Naive thymus-derived CD8-positive, alpha-beta T cell (primary cell): ENCODE measurements at regions of chr6 and their contacts with region 1.

Region 1: GRCh38 chr6:118709859-118710350 is 58.5 kb upstream of the CEP85L start:
- DNase-seq: peak in 9 of 10 donors; percentile 35 to 89 (median 66)
- ATAC-seq: peak; percentile 88 to 93
- H3K4me3 Mint-ChIP-seq: peak overlapping the region; percentile 95 to 99 (median 98)
- H3K27ac Mint-ChIP-seq: peak overlapping the region; percentile 93 to 100 (median 98)
- H3K4me1 Mint-ChIP-seq: peaks cover 39 to 83% (median 66%) of the 10 kb centered on the region in 4 donors
- H3K27me3 Mint-ChIP-seq: no peaks in the 10 kb centered on the region

Region 2: DNA sequence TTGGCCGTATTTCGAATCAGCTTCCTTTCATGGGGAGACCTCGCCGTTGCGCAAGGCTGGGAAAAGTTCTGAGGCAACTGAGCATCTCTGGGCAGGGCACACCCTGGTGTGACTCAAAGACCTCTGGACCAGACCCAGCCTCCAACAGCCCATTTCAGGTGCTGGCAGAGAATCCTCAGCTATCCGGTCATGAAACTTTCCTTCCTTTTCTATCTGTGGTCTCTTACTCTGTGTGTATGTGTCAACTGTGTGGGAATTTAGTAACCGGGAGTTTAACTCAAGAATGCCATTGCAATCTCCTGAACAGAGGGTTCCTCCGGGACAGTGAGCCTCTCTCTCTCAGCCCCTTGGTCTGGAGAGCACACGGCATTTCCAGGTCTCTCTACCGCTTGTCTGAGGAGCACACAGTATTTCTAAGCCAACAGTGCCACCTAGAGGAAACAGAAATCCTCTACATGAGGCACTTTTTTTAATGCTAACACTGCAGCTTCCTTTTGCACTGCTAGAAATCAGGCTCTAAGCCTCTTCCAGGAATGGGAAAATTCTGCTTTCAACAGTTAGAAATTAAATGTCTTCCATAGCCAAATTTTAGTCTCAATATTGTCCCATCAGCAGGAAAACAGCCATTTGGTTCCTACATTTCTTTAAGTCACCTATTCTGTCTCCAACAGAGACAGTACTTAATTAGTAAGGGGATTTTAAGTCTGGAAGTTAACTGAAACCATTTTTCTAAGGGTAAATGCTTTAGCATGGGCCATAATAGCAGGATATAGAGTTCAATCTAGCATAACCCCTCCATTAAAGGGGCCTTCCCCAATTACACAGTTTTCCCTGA is 129.1 kb before region 1 on chr6:
- POLR2A ChIA-PET with region 1: no interaction called
- DNase-seq: peak in 5 of 10 donors; percentile 10 to 34 (median 24)
- ATAC-seq: peak; percentile 56 to 69
- H3K4me3 Mint-ChIP-seq: peak overlapping the region in 2 of 10 donors; percentile 56 to 57
- H3K27ac Mint-ChIP-seq: peak overlapping the region; percentile 65 to 94 (median 85)
- H3K4me1 Mint-ChIP-seq: peaks cover 4 to 32% (median 21%) of the 10 kb centered on the region in 4 donors
- H3K27me3 Mint-ChIP-seq: no peaks in the 10 kb centered on the region

Region 3: DNA sequence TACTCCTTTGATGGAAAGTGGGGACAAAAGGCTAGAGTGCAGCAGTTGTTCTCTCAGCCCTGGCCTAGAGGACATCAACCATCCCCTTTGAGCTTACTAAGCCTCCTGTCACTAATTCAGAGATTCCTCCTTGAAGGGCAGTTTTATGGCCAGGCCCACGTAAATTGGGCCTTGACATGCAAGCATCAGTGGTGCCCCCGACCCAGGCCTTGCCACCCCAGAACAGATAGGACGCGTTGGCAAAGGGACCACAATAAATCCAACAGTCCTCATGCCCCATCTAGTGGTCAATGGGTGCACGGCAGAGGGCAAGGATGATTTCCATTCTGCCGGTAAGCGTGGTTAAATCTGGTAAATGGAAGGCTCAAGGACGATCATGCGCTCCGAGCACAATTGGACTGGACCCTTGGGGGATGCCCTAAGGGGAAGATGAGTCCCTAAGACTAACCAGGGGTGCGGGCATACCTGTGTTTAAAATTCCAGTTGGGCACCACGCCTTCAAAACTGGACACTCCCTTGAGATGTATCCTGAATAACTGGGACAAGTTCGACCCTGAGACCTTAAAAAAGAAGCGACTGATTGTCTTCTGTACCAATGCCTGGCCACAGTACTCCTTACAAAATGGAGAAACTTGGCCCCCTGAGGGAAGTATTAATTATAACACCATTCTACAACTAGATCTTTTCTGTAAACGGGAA is 91.1 kb before region 1 on chr6:
- POLR2A ChIA-PET with region 1: no interaction called
- DNase-seq: peak; percentile 36 to 82 (median 62)
- ATAC-seq: peak; percentile 92 to 93
- H3K4me3 Mint-ChIP-seq: peak overlapping the region in 5 of 10 donors; percentile 9 to 58 (median 27)
- H3K27ac Mint-ChIP-seq: peak overlapping the region; percentile 51 to 94 (median 86)
- H3K4me1 Mint-ChIP-seq: peaks cover 39 to 80% (median 64%) of the 10 kb centered on the region in 4 donors
- H3K27me3 Mint-ChIP-seq: no peaks in the 10 kb centered on the region

Region 4: GRCh38 chr6:118651282-118652050 is 58.4 kb before region 1 on chr6 and contains the start of gene CEP85L:
- POLR2A ChIA-PET with region 1: interaction called, 55 read pairs
- DNase-seq: peak; percentile 81 to 96 (median 90)
- ATAC-seq: peak; percentile 88 to 91
- H3K4me3 Mint-ChIP-seq: peak within 1 kb of the TSS; percentile 90 to 96 (median 94)
- H3K27ac Mint-ChIP-seq: peak within 1 kb of the TSS; percentile 88 to 98 (median 96)
- H3K4me1 Mint-ChIP-seq: peaks cover 24 to 58% (median 51%) of the 10 kb centered on the region in 4 donors
- H3K27me3 Mint-ChIP-seq: no peaks in the 10 kb centered on the region
- polyA plus RNA-seq, gene CEP85L: 31.1 to 50.0 (median 47.5) TPM

Region 5: DNA sequence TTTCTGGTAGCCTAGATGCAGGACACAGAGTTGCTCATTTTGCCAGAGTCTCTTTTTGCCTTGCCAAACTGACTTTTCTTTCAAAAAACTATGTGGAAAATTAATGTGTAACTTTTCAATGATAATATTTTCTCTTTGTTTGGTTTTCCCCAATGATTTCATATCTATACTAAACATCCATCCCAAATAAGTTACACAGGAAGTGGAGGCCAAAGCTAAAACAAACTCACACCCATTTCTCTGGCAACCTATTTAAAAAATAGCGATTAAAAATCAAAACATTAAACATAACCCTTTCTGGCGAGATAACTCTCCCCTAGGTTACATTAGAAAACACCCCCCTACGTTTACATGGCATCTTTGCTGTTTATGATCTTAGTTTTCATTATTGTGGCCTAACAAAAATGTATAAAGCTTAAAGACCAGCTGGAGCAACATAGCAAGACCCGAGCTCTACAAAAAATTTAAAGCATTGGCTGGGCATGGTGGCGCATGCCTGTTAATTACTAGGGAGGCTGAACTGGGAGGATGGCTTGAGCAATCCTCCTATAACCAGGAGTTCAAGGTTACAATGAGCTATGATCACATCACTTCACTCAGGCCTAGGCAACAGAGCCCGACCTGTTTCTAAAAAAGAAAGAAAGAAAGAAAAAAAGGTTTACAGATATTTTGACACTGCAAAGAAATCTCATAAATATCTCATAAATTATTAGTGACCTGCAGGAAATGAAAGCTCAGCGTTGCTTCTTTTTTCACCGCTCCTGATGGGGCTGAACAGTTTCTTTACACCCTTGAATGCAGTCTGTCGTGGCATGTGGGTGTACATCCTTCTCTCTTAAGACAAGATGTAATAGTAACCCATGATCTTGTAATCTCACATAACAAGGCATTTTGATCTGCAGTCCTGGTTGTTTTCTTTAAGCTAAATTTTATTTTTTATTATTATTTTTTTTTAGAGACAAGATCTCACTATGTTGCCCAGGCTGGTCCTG is 25.7 kb before region 1 on chr6:
- POLR2A ChIA-PET with region 1: interaction called, 14 read pairs
- DNase-seq: no peak
- ATAC-seq: no peak
- H3K4me3 Mint-ChIP-seq: peak overlapping the region in 9 of 10 donors; percentile 5 to 70 (median 33)
- H3K27ac Mint-ChIP-seq: peak overlapping the region; percentile 49 to 88 (median 74)
- H3K4me1 Mint-ChIP-seq: peaks cover 47 to 74% (median 73%) of the 10 kb centered on the region in 4 donors
- H3K27me3 Mint-ChIP-seq: no peaks in the 10 kb centered on the region

Region 6: GRCh38 chr6:118731179-118731578 is 21.3 kb after region 1 on chr6:
- POLR2A ChIA-PET with region 1: interaction called, 36 read pairs
- DNase-seq: no peak
- ATAC-seq: no peak
- H3K4me3 Mint-ChIP-seq: no peak overlapping the region
- H3K27ac Mint-ChIP-seq: no peak overlapping the region
- H3K4me1 Mint-ChIP-seq: peaks cover 23 to 55% (median 28%) of the 10 kb centered on the region in 4 donors
- H3K27me3 Mint-ChIP-seq: no peaks in the 10 kb centered on the region

Region 7: DNA sequence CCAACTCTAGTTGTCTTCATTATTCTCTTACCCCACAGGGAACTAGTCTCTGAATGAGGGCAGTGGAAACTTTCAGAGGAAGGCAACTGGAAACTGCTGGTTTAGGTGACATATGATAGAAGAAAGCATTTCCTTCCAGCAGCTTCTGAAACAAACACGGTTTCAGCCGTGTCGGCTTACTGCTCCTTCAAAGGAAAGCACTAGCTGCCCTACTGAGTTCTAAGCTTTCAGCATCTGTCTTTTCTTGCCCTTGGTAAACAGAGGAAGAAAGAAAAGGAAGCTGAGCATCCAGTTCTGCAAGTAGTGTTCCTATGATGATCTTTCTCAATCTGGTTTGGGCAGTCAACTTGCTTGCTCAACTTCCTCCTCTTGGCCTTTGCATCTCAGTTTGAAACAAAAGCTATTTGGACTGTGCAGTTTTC is 59.0 kb after region 1 on chr6:
- POLR2A ChIA-PET with region 1: interaction called, 12 read pairs
- DNase-seq: peak in 5 of 10 donors; percentile 20 to 52 (median 23)
- ATAC-seq: peak; percentile 79 to 85
- H3K4me3 Mint-ChIP-seq: peak overlapping the region in 9 of 10 donors; percentile 1 to 63 (median 36)
- H3K27ac Mint-ChIP-seq: peak overlapping the region; percentile 30 to 94 (median 74)
- H3K4me1 Mint-ChIP-seq: peaks cover 11 to 33% (median 23%) of the 10 kb centered on the region in 4 donors
- H3K27me3 Mint-ChIP-seq: no peaks in the 10 kb centered on the region

Region 8: GRCh38 chr6:118893807-118894424 is 184.0 kb after region 1 on chr6 and contains the start of gene ASF1A:
- POLR2A ChIA-PET with region 1: interaction called, 37 read pairs
- DNase-seq: peak; percentile 93 to 97 (median 95)
- ATAC-seq: peak; percentile 73 to 74
- H3K4me3 Mint-ChIP-seq: peak within 1 kb of the TSS; percentile 90 to 99 (median 95)
- H3K27ac Mint-ChIP-seq: peak within 1 kb of the TSS; percentile 97 to 100 (median 99)
- H3K4me1 Mint-ChIP-seq: peaks cover 38 to 72% (median 62%) of the 10 kb centered on the region in 4 donors
- H3K27me3 Mint-ChIP-seq: peaks cover 0 to 1% (median 0%) of the 10 kb centered on the region in 5 donors
- polyA plus RNA-seq, gene ASF1A: 45.3 to 58.8 (median 47.7) TPM